IMR-90 (cell line): ENCODE measurements at regions of chr12 and their contacts with region 1.

Region 1: GRCh38 chr12:50572271-50572670 is 67.5 kb downstream of the DIP2B start:
- DNase-seq: peak; percentile 89
- ATAC-seq: peak; percentile 78
- H3K4me3 ChIP-seq: no peak overlapping the region
- H3K27ac ChIP-seq: no peak overlapping the region
- H3K4me1 ChIP-seq: peaks cover 29% of the 10 kb centered on the region
- H3K27me3 ChIP-seq: no peaks in the 10 kb centered on the region
- CTCF ChIP-seq: no peak
- POLR2A ChIP-seq: no peak
- RAD21 ChIP-seq: no peak

Region 2: DNA sequence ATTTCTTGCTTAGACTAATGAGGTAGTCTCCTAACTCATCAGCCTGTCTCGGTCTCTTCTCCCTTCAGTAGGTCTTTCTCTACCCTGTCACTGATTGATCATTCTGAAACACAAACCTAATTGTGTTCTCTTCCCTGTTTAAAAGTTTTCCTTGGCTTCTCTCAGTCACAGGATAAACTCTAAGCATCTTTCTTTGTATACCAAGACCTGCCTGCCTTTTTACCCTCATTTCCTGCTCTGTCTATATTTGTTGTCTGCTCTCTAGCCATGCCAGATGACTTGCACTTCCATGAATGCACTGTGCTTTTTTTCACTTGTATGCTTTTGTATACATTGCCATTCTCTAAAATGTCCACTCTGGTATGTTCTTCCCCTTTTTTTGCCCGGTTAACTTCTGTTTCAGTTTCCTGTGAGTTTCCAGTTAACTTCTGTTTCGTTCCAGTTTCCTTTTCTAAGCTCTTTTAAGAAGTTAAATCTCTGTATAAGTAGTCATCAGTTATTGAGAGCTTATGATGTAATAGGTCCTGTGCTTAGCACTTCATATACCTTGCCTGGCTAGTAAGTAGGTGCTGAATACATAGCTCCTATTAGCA is 54.7 kb before region 1 on chr12:
- CTCF ChIA-PET with region 1: no interaction called
- POLR2A ChIA-PET with region 1: no interaction called
- dilution Hi-C with region 1: no loop called
- in situ Hi-C with region 1: no loop called
- intact Hi-C with region 1: loop called (anchors 5 kb)
- DNase-seq: peak; percentile 84
- ATAC-seq: peak; percentile 92
- H3K4me3 ChIP-seq: peak overlapping the region; percentile 29; the same call in 1 of the 2 replicates
- H3K27ac ChIP-seq: peak overlapping the region; percentile 45; the same call in 1 of the 2 replicates
- H3K4me1 ChIP-seq: peaks cover 13% of the 10 kb centered on the region
- H3K27me3 ChIP-seq: no peaks in the 10 kb centered on the region
- CTCF ChIP-seq: no peak
- POLR2A ChIP-seq: no peak
- RAD21 ChIP-seq: peak; percentile 5; the same call in 1 of the 2 replicates

Region 3: DNA sequence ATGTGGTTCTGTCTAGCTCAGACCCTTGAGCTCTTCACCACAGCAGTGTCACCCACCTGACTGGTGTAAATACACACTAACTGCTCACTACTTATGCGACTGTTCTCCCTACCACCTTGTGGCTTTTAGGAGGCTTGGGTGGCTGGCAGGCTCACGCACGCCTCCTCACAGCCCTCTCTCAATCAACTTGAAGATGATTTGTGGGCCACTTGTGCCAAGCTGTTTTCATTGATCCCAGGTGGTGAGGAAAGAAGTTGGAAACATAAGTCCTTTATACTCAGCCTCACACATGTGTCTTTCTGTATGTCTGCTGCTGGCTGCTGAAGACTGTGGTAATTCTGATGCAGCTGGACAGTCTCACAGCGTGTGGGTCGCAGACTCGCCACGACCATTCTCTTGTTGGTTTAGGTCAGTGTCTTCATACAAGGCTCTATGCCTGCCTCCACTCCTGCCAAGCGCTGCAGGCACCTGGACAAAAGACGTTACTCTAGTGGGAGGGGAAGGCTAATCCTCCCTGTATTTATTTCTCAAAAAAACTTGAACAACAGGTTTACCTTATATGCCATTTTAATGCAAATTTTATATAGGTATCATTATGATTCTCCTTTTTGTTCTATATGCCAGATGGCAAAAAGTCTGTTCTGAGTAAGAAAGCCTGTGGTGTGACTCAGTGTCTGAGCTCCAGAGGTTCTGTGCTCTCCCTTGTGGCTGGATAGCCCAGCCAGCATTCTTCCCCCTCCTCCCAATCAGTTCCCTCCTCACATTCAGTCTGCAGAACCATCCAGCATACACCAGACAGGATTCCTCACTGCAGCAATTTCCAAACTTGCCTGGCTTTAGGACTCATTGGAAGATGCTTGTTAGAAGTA is 48.1 kb after region 1 on chr12:
- CTCF ChIA-PET with region 1: no interaction called
- POLR2A ChIA-PET with region 1: no interaction called
- dilution Hi-C with region 1: no loop called
- in situ Hi-C with region 1: no loop called
- intact Hi-C with region 1: loop called (anchors 5 kb)
- DNase-seq: peak; percentile 95
- ATAC-seq: peak; percentile 94
- H3K4me3 ChIP-seq: no peak overlapping the region
- H3K27ac ChIP-seq: peak overlapping the region; percentile 39
- H3K4me1 ChIP-seq: peaks cover 23% of the 10 kb centered on the region
- H3K27me3 ChIP-seq: no peaks in the 10 kb centered on the region
- CTCF ChIP-seq: 0 out of 2 replicates have a peak, but pooled peaks have one; percentile 17
- POLR2A ChIP-seq: no peak
- RAD21 ChIP-seq: no peak; the same call in 1 of the 2 replicates

Region 4: GRCh38 chr12:50637870-50638481 is 65.7 kb after region 1 on chr12:
- CTCF ChIA-PET with region 1: no interaction called
- POLR2A ChIA-PET with region 1: no interaction called
- dilution Hi-C with region 1: no loop called
- in situ Hi-C with region 1: no loop called
- intact Hi-C with region 1: loop called (anchors 5 kb)
- DNase-seq: peak; percentile 69
- ATAC-seq: peak; percentile 45; the same call in 1 of the 2 replicates
- H3K4me3 ChIP-seq: no peak overlapping the region
- H3K27ac ChIP-seq: no peak overlapping the region
- H3K4me1 ChIP-seq: peaks cover 7% of the 10 kb centered on the region
- H3K27me3 ChIP-seq: no peaks in the 10 kb centered on the region
- CTCF ChIP-seq: peak; percentile 71
- POLR2A ChIP-seq: no peak
- RAD21 ChIP-seq: peak; percentile 76

Region 5: DNA sequence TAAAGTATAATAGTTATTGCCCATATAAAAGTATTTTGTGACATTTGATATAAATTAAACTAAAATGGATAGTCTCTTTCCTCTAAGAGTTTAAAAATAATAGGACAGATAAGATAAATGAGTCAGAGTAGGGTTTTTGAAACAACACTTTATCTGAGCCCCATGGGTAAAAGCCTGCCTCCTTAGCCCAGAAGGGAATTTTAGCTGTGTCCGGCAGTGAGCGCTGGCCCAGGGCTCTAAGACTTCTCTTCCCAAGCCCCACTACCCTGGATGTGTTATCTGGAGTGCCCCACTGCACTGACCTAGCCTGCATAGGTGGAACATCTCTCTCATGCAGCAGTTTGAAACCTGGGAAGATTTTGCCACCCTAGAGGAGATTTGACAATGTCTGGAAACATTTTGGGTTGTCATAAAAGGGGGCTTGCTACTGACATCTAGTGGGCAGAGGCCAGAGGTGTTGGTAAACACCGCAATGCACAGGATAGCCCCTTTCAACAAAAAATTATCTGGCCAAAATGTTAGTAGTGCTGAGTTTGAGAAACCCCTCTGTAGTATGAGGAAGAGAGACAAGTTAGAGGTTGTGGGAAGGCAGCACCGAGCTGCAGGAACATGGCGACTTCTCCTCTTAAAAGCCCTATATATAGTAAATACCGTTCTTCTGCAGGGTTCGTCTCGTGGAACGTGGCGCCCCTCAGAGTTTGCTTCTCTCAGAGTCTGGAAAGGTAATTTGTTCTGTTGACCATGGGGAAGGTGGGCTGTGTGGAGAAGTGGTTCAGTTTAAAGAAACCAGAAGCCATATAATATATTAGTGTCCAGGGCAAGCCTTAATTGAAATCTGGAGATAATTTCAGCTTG is 162.4 kb after region 1 on chr12:
- CTCF ChIA-PET with region 1: no interaction called
- POLR2A ChIA-PET with region 1: no interaction called
- dilution Hi-C with region 1: no loop called
- in situ Hi-C with region 1: no loop called
- intact Hi-C with region 1: loop called (anchors 2 kb)
- DNase-seq: peak; percentile 33
- ATAC-seq: peak; percentile 44; the same call in 1 of the 2 replicates
- H3K4me3 ChIP-seq: no peak overlapping the region
- H3K27ac ChIP-seq: no peak overlapping the region
- H3K4me1 ChIP-seq: peaks cover 6% of the 10 kb centered on the region
- H3K27me3 ChIP-seq: no peaks in the 10 kb centered on the region
- CTCF ChIP-seq: peak; percentile 53
- POLR2A ChIP-seq: no peak
- RAD21 ChIP-seq: peak; percentile 66